ENCODE measurements at regions of chrX and their contacts with region 1.

Region 1: DNA sequence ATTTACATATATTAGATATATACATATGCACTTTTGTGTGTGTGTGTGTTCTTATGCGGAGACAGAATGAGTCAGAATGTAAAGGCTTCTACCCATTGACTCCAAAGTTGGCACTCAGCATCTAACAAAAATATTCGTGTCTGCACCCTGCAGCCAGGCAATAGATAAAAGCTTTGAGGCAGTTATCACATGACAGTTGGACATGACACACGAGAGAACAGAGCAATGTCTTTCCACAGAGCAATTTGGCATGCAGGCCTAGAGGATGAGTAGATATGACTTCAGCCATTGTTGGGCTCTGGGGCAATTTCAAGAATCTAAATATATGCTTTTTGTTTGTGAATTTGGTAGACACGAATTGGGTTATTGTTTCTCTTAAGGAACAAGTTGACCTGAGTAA is 391.2 kb downstream of the SLITRK2 start:
- DNase-seq: no peak
- H3K4me3 ChIP-seq: no peak overlapping the region
- H3K27ac ChIP-seq: no peak overlapping the region
- H3K4me1 ChIP-seq: no peaks in the 10 kb centered on the region
- H3K27me3 ChIP-seq: no peaks in the 10 kb centered on the region
- CTCF ChIP-seq: no peak
- EP300 ChIP-seq: no peak
- POLR2A ChIP-seq: no peak

Region 2: GRCh38 chrX:146144039-146144438 is 64.8 kb before region 1 on chrX:
- intact Hi-C with region 1: loop called (anchors 10 kb)
- DNase-seq: peak in 1 of 2 donors; percentile 9
- H3K4me3 ChIP-seq: no peak overlapping the region
- H3K27ac ChIP-seq: no peak overlapping the region
- H3K4me1 ChIP-seq: no peaks in the 10 kb centered on the region
- H3K27me3 ChIP-seq: no peaks in the 10 kb centered on the region
- CTCF ChIP-seq: no peak
- EP300 ChIP-seq: no peak
- POLR2A ChIP-seq: no peak

Measured in stomach (tissue), 19 donors.